Ascending aorta (tissue), 2 donors: ENCODE measurements at regions of chr3 and their contacts with region 1.

Region 1: DNA sequence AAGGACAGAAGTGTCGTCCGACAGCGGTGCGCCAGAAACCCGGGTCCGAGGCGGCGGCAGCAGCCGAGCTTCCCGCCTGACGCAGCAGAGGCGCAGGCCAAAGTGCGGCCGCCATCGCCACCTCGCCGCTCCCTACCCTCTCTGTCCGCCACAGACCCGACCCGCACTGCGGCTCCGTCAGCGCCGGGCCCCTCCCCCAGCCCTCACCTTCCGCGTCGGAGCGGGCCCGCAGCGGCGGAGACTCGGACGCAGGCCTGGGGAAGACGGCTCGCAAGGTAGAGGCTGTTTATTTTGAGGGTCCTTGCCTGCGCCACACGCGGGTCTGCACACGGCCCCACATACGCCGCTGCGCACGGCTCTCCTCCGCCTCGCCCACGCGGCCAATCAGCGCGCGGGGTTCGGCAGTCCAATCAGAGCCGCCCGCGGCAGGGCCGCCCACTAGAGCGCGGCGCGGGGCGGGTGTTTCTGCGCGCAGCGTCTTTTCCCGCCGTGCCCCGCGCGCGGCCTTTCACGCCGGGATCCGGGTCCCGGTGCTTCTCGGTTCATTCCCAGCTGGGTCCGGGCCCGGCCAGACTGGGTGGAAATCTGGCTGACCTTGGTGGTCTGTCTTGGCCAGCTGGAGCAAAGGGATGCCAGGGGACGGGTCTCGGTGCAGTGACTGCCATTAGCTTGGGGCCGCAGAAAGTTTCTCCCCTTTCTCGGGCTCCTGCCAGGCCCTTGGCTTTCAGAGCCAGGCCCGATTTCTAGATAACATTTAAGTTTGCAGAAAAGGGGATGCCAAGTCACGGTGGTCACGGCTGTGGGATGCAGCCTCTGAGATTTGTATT is at the start of gene CNBP:
- DNase-seq: peak; percentile 66 to 96
- H3K4me3 ChIP-seq: peak within 1 kb of the TSS; percentile 95 to 96
- H3K27ac ChIP-seq: peak within 1 kb of the TSS; percentile 99 to 100
- H3K4me1 ChIP-seq: peaks cover 7 to 27% of the 10 kb centered on the region in 2 donors
- H3K27me3 ChIP-seq: no peaks in the 10 kb centered on the region
- CTCF ChIP-seq: no peak
- total RNA-seq, gene CNBP: 166 TPM

Region 2: DNA sequence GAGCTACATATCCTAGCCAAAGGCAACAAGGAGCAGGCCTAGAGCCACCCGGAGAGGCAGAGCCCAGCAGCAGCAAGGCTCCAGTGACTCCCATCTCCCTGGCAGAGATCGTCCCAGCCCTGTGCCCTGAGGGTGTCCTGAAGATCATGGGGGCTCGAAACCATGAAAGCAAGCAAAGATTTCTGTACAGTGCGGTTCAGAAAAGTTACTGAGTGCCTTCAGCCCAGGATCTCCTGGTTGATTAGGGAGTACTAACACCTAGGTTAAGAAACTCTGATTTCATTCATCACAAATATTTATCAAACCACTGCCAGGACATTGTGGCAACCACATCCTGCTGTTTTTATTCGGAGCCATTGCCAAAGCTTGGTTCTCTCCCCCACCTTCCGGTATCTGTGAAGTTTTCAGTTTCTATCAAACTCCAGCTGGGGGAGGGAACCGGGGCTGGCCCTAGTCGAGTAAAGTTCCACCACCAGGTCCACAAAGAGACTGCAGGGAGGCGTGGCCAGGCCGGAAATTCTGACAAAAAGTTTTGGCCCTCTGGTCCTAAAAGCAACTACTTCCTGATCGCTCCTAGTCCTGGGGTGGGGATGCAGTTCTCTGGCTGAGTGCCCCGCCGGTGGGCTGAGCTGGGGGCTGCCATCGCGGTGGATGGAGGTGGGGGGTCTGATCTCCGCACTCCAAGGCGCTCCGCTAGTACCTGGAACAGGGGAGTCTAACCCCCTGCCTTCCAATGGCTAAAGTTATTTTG is 63.4 kb before region 1 on chr3:
- intact Hi-C with region 1: loop called (anchors 2 kb)
- DNase-seq: peak; percentile 74 to 96
- H3K4me3 ChIP-seq: peak overlapping the region; percentile 98 to 100
- H3K27ac ChIP-seq: peak overlapping the region; percentile 97 to 99
- H3K4me1 ChIP-seq: peaks cover 9 to 18% of the 10 kb centered on the region in 2 donors
- H3K27me3 ChIP-seq: no peaks in the 10 kb centered on the region
- CTCF ChIP-seq: peak; percentile 23 to 37 (median 29)

Region 3: GRCh38 chr3:129160891-129161859 is 22.6 kb before region 1 on chr3 and contains the start of gene ISY1:
- intact Hi-C with region 1: loop called (anchors 1 kb)
- DNase-seq: peak; percentile 47 to 93
- H3K4me3 ChIP-seq: peak within 1 kb of the TSS; percentile 79 to 97
- H3K27ac ChIP-seq: peak within 1 kb of the TSS; percentile 95 to 97
- H3K4me1 ChIP-seq: peaks cover 0 to 20% of the 10 kb centered on the region in 2 donors
- H3K27me3 ChIP-seq: no peaks in the 10 kb centered on the region
- CTCF ChIP-seq: peak; percentile 74 to 83 (median 80)
- total RNA-seq, gene ISY1: 22.5 TPM

Region 4: DNA sequence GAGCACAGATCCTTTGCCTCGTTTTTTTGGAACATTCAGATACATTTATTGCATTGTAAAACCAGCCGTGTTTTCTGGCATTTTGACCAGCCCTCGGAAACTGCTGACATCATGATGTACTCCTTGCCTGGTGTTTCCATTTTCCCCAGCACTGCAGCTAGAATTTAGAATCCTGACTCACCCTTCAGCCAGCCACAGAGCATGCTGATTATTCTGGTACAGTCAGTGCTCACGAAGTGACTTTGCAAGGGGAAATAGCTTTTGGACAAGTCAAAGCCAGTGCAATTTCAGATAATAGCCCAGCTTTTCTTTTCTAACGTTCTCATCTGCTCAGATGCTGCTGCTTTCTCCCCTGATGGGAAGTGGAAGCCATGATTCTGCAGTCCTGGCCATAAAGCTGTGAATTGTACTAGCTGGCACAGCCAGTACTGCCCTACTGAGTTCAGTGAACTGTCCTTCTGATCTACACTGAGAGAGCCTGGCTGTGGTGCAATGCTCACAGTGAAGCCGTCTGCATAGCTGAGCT is 12.0 kb after region 1 on chr3:
- intact Hi-C with region 1: loop called (anchors 1 kb)
- DNase-seq: peak; percentile 47 to 90
- H3K4me3 ChIP-seq: peak overlapping the region; percentile 19 to 46
- H3K27ac ChIP-seq: peak overlapping the region; percentile 62 to 82
- H3K4me1 ChIP-seq: peaks cover 0 to 12% of the 10 kb centered on the region in 2 donors
- H3K27me3 ChIP-seq: no peaks in the 10 kb centered on the region
- CTCF ChIP-seq: no peak

Region 5: GRCh38 chr3:129224984-129225393 is 41.2 kb after region 1 on chr3:
- intact Hi-C with region 1: loop called (anchors 5 kb)
- DNase-seq: peak; percentile 66 to 89
- H3K4me3 ChIP-seq: peak overlapping the region; percentile 8 to 43
- H3K27ac ChIP-seq: peak overlapping the region; percentile 57 to 69
- H3K4me1 ChIP-seq: peaks cover 3 to 10% of the 10 kb centered on the region in 2 donors
- H3K27me3 ChIP-seq: no peaks in the 10 kb centered on the region
- CTCF ChIP-seq: no peak

Region 6: GRCh38 chr3:129316131-129317013 is 132.6 kb after region 1 on chr3:
- intact Hi-C with region 1: loop called (anchors 2 kb)
- DNase-seq: peak in 1 of 2 donors; percentile 91
- H3K4me3 ChIP-seq: peak overlapping the region; percentile 82 to 87
- H3K27ac ChIP-seq: peak overlapping the region; percentile 89 to 90
- H3K4me1 ChIP-seq: peaks cover 5 to 18% of the 10 kb centered on the region in 2 donors
- H3K27me3 ChIP-seq: no peaks in the 10 kb centered on the region
- CTCF ChIP-seq: peak in 2 of 3 experiments; percentile 57 to 68